Activated T-helper 1 cell treated with anti-CD3 and anti-CD28 coated beads, Interleukin-12 subunit alpha, Interleukin-12 subunit beta, Interleukin-2, Interleukin-4 antibody, amounts not matched to agents 30 ng/mL and 10 ng/mL and 1 ng/mL, durations not matched to agents 14 hours and 24 hours and 36 hours (primary cell): ENCODE measurements at regions of chr2 and their contacts with region 1.

Region 1: GRCh38 chr2:8544786-8545694 is 136.8 kb upstream of the ID2 start:
- DNase-seq: peak; percentile 83
- H3K4me3 Mint-ChIP-seq: peak overlapping the region; percentile 59
- H3K27ac Mint-ChIP-seq: peak overlapping the region; percentile 99
- H3K4me1 Mint-ChIP-seq: peaks cover 80% of the 10 kb centered on the region
- H3K27me3 Mint-ChIP-seq: no peaks in the 10 kb centered on the region

Region 2: DNA sequence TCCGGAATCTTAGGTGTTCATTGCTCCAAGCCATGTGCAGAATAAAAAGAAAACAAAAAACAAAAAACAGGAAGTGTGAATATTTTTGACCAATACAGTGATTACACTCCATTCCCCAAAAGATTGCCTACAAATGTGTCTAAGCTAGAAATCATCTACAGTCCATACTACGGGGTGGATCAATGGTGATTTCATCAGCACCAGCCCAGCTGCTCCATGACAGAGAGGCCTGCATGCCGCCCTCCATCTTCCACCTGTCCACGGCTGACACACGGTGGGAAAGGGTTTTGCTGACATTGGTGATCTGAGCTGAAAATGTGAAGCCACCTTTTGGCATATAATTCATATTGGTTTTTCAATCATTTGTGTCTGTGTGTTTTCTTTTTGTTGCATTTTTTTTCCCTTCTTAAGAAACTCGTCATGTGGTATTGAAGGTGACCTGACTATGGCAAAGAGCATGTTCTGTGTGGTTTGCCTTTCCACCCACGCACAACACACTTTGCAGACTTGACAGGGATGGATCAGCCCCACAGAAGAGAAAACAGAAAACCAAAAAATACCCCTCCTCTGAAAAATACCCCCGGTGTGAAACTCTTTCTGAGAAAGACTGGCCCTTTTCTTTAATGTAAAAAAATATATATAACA is 1094.7 kb before region 1 on chr2:
- intact Hi-C with region 1: loop called (anchors 1 kb)
- DNase-seq: peak; percentile 65
- H3K4me3 Mint-ChIP-seq: peak overlapping the region; percentile 9
- H3K27ac Mint-ChIP-seq: peak overlapping the region; percentile 98
- H3K4me1 Mint-ChIP-seq: peaks cover 90% of the 10 kb centered on the region
- H3K27me3 Mint-ChIP-seq: no peaks in the 10 kb centered on the region

Region 3: GRCh38 chr2:7758073-7758759 is 786.8 kb before region 1 on chr2:
- intact Hi-C with region 1: loop called (anchors 1 kb)
- DNase-seq: no peak
- H3K4me3 Mint-ChIP-seq: no peak overlapping the region
- H3K27ac Mint-ChIP-seq: peak overlapping the region; percentile 76
- H3K4me1 Mint-ChIP-seq: peaks cover 22% of the 10 kb centered on the region
- H3K27me3 Mint-ChIP-seq: no peaks in the 10 kb centered on the region

Region 4: DNA sequence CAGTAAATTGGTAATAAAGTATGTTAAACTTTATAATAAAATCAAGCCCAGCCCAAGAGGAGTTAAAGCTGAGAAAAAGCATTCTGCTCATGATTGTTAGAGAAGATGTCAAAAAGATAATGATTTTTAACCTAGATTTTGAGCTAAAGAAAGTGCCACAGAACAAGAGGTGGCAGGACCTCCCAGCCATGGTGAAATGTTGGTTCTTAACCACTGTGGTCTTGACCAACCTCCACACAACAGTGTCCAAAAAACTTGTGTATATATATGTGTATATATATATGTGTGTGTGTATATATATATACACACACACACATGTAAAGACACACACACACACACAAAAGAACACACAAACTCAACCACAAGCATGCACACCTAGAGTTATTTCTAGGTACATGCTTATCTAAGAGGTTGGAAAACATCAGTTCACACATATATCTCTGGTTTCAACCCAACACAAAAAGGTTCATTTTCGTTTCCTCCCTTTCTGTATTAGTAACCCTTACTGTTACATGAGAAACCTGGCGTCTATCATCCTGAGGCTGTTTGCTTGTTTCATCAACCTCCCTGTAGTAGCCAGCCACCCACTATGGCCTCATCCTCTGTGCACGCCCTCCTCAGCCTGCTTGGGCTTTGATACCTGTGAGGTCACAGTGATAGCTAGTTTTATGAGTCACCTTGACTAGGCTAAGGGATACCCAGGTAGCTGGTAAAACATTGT is 495.0 kb before region 1 on chr2:
- intact Hi-C with region 1: loop called (anchors 1 kb)
- DNase-seq: peak; percentile 52
- H3K4me3 Mint-ChIP-seq: peak overlapping the region; percentile 43
- H3K27ac Mint-ChIP-seq: peak overlapping the region; percentile 93
- H3K4me1 Mint-ChIP-seq: peaks cover 48% of the 10 kb centered on the region
- H3K27me3 Mint-ChIP-seq: no peaks in the 10 kb centered on the region

Region 5: DNA sequence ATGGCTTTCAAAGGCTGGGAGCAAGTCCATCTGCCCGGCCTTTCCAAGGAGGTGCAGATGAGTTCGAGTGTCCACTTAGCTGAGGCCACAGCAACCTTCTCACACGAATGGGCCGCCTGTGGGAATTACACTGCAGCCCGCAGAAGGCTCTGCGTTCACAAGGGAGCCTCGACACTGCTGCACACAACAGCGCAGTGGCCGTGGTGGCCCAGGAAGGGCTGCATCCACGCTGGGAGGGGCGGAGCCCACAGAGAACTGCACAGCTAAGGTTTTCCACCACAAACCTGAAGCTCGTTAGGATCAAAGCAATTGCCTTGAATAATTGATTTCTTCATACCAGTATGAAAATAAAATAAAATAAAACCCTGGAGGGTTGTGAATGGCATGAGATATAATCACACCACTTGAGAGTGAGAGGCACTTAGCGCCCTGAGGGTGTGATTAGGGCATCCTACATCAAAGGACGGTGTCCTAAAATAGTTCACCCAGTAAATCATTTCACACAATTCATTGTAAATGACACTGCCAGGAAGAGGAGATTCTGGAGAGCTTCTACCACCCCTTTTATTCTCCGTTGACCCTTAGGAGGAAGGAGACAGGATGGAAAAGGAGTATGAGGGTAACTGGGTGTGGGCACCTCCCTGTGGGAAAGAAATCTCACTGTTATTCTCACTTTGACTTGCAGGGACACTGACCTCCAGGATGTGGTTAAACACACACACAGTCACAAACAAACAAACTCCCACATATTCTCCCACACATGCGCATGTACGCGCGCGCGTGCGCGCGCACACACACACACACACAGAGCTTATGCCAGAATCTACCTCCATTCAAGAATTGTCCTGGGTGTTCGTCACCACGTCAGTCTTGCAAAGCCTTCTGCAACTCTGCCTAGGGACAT is 119.8 kb before region 1 on chr2:
- intact Hi-C with region 1: loop called (anchors 1 kb)
- DNase-seq: no peak
- H3K4me3 Mint-ChIP-seq: no peak overlapping the region
- H3K27ac Mint-ChIP-seq: peak overlapping the region; percentile 80
- H3K4me1 Mint-ChIP-seq: peaks cover 32% of the 10 kb centered on the region
- H3K27me3 Mint-ChIP-seq: no peaks in the 10 kb centered on the region

Region 6: DNA sequence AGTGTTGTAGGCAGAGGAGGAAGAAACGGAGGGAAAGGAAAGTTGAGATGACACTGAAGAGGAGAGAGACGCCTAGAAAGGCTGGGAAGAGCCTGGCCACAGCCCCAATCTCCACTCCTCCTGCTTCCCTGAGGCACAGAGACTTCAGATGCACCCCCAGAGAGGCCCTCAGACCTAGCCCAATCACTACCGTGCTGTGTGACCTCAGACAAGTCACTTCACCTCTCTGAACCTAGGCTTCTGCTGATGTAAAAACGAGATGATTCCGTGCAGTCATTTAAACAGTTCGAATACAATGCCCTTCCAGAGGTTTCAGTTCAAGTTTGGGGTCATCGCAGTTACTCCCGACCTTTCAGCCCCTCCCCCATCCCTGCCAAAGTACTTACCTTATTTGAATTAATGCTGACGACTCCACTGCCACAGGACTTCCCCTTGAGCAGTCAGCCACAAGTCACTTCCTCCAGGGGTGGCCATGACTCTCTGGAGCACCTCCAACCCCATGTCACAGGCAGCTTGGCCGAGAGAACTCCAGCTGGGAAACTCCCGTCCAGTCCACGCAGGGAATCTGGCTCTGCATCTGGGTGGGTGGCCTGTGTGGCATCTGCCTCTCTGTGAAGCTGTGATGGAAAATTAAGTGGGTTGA is 31.6 kb after region 1 on chr2:
- intact Hi-C with region 1: loop called (anchors 1 kb)
- DNase-seq: no peak
- H3K4me3 Mint-ChIP-seq: peak overlapping the region; percentile 23
- H3K27ac Mint-ChIP-seq: peak overlapping the region; percentile 73
- H3K4me1 Mint-ChIP-seq: peaks cover 50% of the 10 kb centered on the region
- H3K27me3 Mint-ChIP-seq: peaks cover 3% of the 10 kb centered on the region